Activated B cell treated with CpG ODN at 0.5 μM for 24 hours (primary cell): ENCODE measurements at regions of chr1 and their contacts with region 1.

Region 1: GRCh38 chr1:87292684-87293493 is 35.8 kb upstream of the LMO4 start:
- DNase-seq: no peak
- ATAC-seq: peak; percentile 52
- H3K4me3 Mint-ChIP-seq: no peak overlapping the region
- H3K27ac Mint-ChIP-seq: no peak overlapping the region
- H3K4me1 Mint-ChIP-seq: no peaks in the 10 kb centered on the region
- H3K27me3 Mint-ChIP-seq: peaks cover 2% of the 10 kb centered on the region
- CTCF ChIP-seq: peak; percentile 71

Region 2: DNA sequence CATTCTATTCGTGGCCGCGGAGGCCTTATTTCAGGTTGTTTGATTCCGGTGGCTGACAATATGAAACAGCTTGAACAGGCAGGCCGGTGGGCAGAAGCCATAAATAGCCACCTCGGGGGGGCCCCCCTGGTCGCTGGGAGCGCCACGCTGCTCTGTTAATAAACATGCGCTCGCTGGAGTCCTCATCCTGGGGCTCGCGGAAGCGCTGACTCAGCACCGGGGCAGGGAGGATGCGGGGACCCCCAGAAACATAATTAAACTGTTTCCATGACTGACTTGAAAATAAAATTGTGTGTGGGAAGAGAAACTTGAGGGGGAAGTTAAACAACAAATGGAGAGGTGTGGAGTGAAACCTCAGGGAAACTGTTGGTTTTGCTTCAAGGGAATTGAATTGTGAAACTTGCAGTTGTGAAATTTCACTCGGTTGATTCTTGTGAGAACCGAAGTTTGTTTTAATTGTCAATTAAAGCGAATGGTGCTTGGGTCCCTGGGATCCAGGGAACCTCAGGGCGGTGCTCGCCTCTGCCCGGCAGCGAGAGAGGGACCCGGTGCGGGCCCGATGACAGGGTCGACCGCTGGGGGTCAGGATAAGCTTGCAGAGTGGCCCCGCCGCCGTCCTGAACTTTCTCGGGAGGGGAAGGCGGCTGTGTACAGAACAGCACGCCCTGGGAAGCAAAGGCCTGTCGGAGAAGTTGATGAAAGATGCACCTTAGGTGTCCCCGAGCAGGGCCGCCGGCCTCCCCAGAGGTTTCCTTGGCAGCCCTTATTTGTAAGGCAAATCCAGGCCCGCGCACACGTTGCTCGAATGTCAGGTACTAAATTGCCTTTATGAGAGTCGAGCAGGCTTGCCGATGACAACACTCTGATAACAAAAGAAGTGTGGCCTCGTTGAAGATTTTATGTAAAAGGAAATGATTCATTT is 141.1 kb before region 1 on chr1:
- CTCF ChIA-PET with region 1: no interaction called
- POLR2A ChIA-PET with region 1: no interaction called
- intact Hi-C with region 1: loop called (anchors 5 kb)
- DNase-seq: peak; percentile 27
- ATAC-seq: peak; percentile 74
- H3K4me3 Mint-ChIP-seq: peak overlapping the region; percentile 86
- H3K27ac Mint-ChIP-seq: no peak overlapping the region
- H3K4me1 Mint-ChIP-seq: peaks cover 14% of the 10 kb centered on the region
- H3K27me3 Mint-ChIP-seq: peaks cover 34% of the 10 kb centered on the region
- CTCF ChIP-seq: no peak

Region 3: DNA sequence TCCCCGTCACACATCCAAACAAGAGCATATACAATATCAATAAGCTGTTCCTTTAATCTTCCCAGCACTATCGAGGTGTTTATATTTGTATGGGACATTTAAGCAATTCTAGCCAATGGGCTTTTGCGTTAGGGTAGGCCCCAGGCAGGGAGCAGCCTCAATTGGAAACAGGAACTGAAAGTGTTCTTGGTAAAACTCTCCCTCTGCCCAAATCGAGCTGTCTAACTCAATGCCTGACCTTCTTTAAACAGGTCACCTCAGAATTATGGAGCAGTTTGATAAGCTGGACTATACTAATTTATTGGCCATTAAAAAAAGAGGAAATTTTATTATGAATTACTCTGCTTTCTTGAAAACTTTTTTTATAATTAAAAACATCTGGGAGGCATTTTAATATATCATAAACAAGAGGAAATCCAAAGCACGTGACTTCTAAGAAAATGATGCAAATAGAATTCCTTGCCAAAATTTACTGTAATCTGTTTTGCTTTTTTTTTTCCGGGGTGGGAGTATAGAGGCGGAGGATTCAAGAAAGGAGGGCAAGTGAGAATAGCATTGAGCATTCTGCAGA is 533.9 kb after region 1 on chr1:
- CTCF ChIA-PET with region 1: no interaction called
- POLR2A ChIA-PET with region 1: no interaction called
- intact Hi-C with region 1: no loop called
- DNase-seq: no peak
- ATAC-seq: peak; percentile 95
- H3K4me3 Mint-ChIP-seq: peak overlapping the region; percentile 44
- H3K27ac Mint-ChIP-seq: peak overlapping the region; percentile 65
- H3K4me1 Mint-ChIP-seq: peaks cover 43% of the 10 kb centered on the region
- H3K27me3 Mint-ChIP-seq: no peaks in the 10 kb centered on the region
- CTCF ChIP-seq: no peak

Region 4: GRCh38 chr1:88061492-88062177 is 768.7 kb after region 1 on chr1:
- CTCF ChIA-PET with region 1: interaction called, 20 read pairs
- POLR2A ChIA-PET with region 1: no interaction called
- intact Hi-C with region 1: loop called (anchors 1 kb)
- DNase-seq: no peak
- ATAC-seq: peak; percentile 60
- H3K4me3 Mint-ChIP-seq: no peak overlapping the region
- H3K27ac Mint-ChIP-seq: no peak overlapping the region
- H3K4me1 Mint-ChIP-seq: no peaks in the 10 kb centered on the region
- H3K27me3 Mint-ChIP-seq: no peaks in the 10 kb centered on the region
- CTCF ChIP-seq: no peak

Region 5: DNA sequence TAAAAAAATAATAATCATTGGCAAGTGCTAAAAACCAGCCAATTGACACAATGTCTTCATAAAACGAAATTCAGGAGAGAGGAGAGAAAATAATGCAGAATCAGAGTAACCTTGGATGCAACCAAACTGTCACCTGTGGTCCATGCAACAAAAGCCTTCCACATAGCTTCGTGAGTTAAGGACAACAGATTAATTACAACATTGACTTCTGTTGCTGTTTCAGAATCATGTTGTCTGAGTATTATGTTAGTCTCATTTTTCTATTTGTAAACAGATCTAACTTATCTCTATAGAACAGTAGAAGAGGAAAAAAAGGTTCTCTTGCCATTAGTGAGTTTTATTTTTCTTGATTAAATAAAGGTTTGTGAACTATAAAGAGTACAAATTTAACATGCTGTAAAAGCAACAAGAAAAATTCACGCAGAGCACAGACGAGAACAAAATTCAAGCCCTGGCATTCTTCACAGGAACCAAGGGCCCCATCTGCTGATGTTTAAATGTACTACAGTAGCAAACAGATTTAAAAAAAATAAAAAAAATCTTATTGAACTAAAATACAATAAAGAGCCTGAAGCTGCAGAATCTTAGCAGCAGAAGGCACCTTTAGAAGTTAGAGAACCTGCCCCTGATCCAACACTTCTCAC is 1010.1 kb after region 1 on chr1:
- CTCF ChIA-PET with region 1: no interaction called
- POLR2A ChIA-PET with region 1: no interaction called
- intact Hi-C with region 1: loop called (anchors 1 kb)
- DNase-seq: no peak
- ATAC-seq: no peak
- H3K4me3 Mint-ChIP-seq: no peak overlapping the region
- H3K27ac Mint-ChIP-seq: no peak overlapping the region
- H3K4me1 Mint-ChIP-seq: no peaks in the 10 kb centered on the region
- H3K27me3 Mint-ChIP-seq: peaks cover 6% of the 10 kb centered on the region
- CTCF ChIP-seq: no peak